CD4-positive, alpha-beta T cell (primary cell): ENCODE measurements at regions of chr12 and their contacts with region 1.

Region 1: DNA sequence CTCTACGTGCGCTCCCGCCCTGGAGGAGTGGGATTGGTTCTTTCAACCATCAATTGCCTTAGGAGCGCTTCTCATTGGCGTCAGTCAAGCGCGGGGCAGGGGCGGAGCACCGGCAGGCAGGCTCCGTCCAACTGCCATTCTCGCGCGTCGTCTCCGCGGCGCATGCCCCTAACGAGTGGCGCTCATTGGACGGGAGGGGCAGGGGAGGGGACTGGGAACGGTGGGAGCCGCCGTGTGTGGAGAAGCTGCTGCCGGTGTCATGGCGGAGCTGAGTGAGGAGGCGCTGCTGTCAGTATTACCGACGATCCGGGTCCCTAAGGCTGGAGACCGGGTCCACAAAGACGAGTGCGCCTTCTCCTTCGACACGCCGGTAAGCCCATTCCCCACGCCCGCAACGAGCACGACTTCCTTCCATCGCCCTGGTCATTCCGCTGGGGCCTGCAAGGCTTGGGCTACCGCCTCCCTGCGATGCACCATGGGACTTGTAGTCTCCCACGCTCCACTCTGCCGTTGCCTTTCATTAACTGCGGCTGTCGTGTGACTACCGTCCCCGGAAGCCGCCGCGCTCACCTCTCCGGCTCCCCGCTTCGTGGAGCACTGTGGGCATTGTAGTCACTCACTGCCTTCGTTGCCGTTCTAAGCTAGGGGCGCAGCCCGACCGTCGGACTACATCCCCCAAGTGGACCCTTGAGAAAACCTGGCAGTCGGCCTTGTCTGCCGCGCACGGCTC is at the start of gene USP5:
- DNase-seq: peak; percentile 94 to 100 (median 97)
- ATAC-seq: peak; percentile 77
- H3K4me3 ChIP-seq: peak within 1 kb of the TSS; percentile 73
- H3K4me3 Mint-ChIP-seq: peak within 1 kb of the TSS; percentile 91
- H3K27ac ChIP-seq: peak within 1 kb of the TSS; percentile 89 to 95
- H3K27ac Mint-ChIP-seq: peak within 1 kb of the TSS; percentile 87
- H3K4me1 ChIP-seq: peaks cover 42% of the 10 kb centered on the region
- H3K4me1 Mint-ChIP-seq: peaks cover 29% of the 10 kb centered on the region
- H3K27me3 ChIP-seq: no peaks in the 10 kb centered on the region
- H3K27me3 Mint-ChIP-seq: no peaks in the 10 kb centered on the region
- CTCF ChIP-seq: no peak
- total RNA-seq, gene USP5: 31.8 to 33.4 TPM

Region 2: DNA sequence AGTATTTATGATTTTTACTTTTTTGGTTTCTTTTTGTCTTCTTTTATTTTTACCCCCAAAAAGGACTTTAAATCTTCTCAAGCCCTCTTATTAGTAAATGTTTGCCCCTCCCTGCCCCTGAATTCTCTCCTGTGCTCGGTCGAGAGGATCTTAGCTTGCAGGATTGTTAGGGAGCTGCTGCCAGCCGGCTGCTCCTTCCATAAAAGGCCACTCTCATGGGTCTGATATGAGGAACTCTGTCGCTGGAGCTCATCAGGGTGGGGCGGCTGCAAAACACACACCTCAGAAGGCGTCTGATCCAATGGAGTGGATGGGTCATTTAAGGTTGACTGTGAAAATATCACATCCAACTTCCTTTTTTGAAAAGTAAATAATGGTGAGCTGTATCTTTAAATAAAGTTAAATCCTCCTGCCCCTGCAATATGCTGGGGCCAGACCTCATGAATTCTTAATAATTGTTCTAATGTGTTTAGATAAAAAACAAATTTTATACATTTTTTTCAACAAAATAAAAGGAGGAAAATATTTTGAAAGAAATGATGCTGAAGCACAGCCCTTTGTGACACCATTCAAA is 459.5 kb before region 1 on chr12:
- CTCF ChIA-PET with region 1: no interaction called
- POLR2A ChIA-PET with region 1: no interaction called
- intact Hi-C with region 1: no loop called
- DNase-seq: no peak
- ATAC-seq: no peak
- H3K4me3 ChIP-seq: no peak overlapping the region
- H3K4me3 Mint-ChIP-seq: no peak overlapping the region
- H3K27ac ChIP-seq: no peak overlapping the region
- H3K27ac Mint-ChIP-seq: no peak overlapping the region
- H3K4me1 ChIP-seq: no peaks in the 10 kb centered on the region
- H3K4me1 Mint-ChIP-seq: no peaks in the 10 kb centered on the region
- H3K27me3 ChIP-seq: no peaks in the 10 kb centered on the region
- H3K27me3 Mint-ChIP-seq: no peaks in the 10 kb centered on the region
- CTCF ChIP-seq: no peak

Region 3: GRCh38 chr12:6662906-6663742 is 189.0 kb before region 1 on chr12 and contains the start of gene ING4:
- CTCF ChIA-PET with region 1: no interaction called
- POLR2A ChIA-PET with region 1: interaction called, 4 read pairs
- intact Hi-C with region 1: loop called in 1 of 2 experiments (anchors 5 kb)
- DNase-seq: peak; percentile 88 to 99 (median 94)
- ATAC-seq: peak; percentile 97
- H3K4me3 ChIP-seq: peak within 1 kb of the TSS; percentile 82
- H3K4me3 Mint-ChIP-seq: peak within 1 kb of the TSS; percentile 95
- H3K27ac ChIP-seq: peak within 1 kb of the TSS; percentile 79 to 89
- H3K27ac Mint-ChIP-seq: peak within 1 kb of the TSS; percentile 91
- H3K4me1 ChIP-seq: peaks cover 29% of the 10 kb centered on the region
- H3K4me1 Mint-ChIP-seq: peaks cover 34% of the 10 kb centered on the region
- H3K27me3 ChIP-seq: no peaks in the 10 kb centered on the region
- H3K27me3 Mint-ChIP-seq: no peaks in the 10 kb centered on the region
- CTCF ChIP-seq: no peak
- total RNA-seq, gene ING4: 13.8 to 17.4 TPM

Region 4: GRCh38 chr12:6792522-6793201 is 59.4 kb before region 1 on chr12:
- CTCF ChIA-PET with region 1: no interaction called
- POLR2A ChIA-PET with region 1: interaction called, 16 read pairs
- intact Hi-C with region 1: loop called in 1 of 2 experiments (anchors 2 kb)
- DNase-seq: peak in 12 of 14 experiments; percentile 41 to 75 (median 58)
- ATAC-seq: peak; percentile 69
- H3K4me3 ChIP-seq: peak overlapping the region; percentile 66
- H3K4me3 Mint-ChIP-seq: peak overlapping the region; percentile 96
- H3K27ac ChIP-seq: peak overlapping the region; percentile 72 to 81
- H3K27ac Mint-ChIP-seq: peak overlapping the region; percentile 93
- H3K4me1 ChIP-seq: peaks cover 79% of the 10 kb centered on the region
- H3K4me1 Mint-ChIP-seq: peaks cover 80% of the 10 kb centered on the region
- H3K27me3 ChIP-seq: no peaks in the 10 kb centered on the region
- H3K27me3 Mint-ChIP-seq: no peaks in the 10 kb centered on the region
- CTCF ChIP-seq: no peak

Region 5: GRCh38 chr12:6867413-6868210 is 15.5 kb after region 1 on chr12 and contains the start of gene TPI1:
- CTCF ChIA-PET with region 1: interaction called, 46 read pairs
- POLR2A ChIA-PET with region 1: interaction called, 106 read pairs
- intact Hi-C with region 1: loop called (anchors 1 kb)
- DNase-seq: peak; percentile 55 to 88 (median 72)
- ATAC-seq: peak; percentile 64
- H3K4me3 ChIP-seq: peak within 1 kb of the TSS; percentile 68
- H3K4me3 Mint-ChIP-seq: peak within 1 kb of the TSS; percentile 94
- H3K27ac ChIP-seq: peak within 1 kb of the TSS; percentile 73 to 78
- H3K27ac Mint-ChIP-seq: peak within 1 kb of the TSS; percentile 80
- H3K4me1 ChIP-seq: peaks cover 53% of the 10 kb centered on the region
- H3K4me1 Mint-ChIP-seq: peaks cover 56% of the 10 kb centered on the region
- H3K27me3 ChIP-seq: no peaks in the 10 kb centered on the region
- H3K27me3 Mint-ChIP-seq: no peaks in the 10 kb centered on the region
- CTCF ChIP-seq: no peak
- total RNA-seq, gene TPI1: 46.8 to 48.7 TPM

Region 6: DNA sequence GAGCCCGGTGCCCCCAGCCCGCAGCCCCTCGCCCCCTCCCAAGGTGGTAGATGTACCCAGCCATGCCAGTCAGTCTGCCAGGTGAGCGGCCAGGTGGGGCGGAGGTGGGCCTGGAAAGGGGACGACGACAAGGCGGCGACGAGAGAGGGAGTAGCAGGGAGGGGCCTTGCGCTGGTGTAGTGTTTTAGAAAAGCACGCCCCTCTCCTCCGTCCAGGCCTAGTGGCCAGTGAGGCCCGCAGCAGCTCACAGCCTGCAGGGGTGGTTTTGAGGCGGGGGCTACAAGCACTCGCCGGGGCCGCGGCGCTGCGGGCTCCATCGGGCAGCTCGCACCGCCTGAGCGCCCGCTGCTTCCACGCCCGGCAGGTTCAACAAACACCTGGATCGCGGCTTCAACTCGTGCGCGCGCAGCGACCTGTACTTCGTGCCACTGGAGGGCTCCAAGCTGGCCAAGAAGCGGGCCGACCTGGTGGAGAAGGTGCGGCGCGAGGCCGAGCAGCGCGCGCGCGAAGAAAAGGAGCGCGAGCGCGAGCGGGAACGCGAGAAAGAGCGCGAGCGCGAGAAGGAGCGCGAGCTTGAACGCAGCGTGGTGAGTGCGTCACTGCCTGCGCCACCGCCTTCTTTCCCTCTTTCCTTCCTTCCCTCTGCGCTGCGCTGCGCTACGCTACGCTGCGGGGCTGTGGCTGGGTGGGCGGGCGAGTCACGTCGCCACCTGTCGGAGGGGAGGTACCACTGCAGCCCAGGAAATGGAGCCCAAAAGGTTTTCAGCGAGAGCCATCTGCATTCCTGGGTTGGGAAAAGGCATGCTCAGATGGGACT is 85.6 kb after region 1 on chr12:
- CTCF ChIA-PET with region 1: interaction called, 10 read pairs
- POLR2A ChIA-PET with region 1: interaction called, 54 read pairs
- intact Hi-C with region 1: no loop called
- DNase-seq: peak; percentile 86 to 99 (median 92)
- ATAC-seq: peak; percentile 91
- H3K4me3 ChIP-seq: peak overlapping the region; percentile 72
- H3K4me3 Mint-ChIP-seq: peak overlapping the region; percentile 90
- H3K27ac ChIP-seq: peak overlapping the region; percentile 89 to 92
- H3K27ac Mint-ChIP-seq: peak overlapping the region; percentile 95
- H3K4me1 ChIP-seq: peaks cover 47% of the 10 kb centered on the region
- H3K4me1 Mint-ChIP-seq: peaks cover 61% of the 10 kb centered on the region
- H3K27me3 ChIP-seq: no peaks in the 10 kb centered on the region
- H3K27me3 Mint-ChIP-seq: no peaks in the 10 kb centered on the region
- CTCF ChIP-seq: peak; percentile 89

Region 7: DNA sequence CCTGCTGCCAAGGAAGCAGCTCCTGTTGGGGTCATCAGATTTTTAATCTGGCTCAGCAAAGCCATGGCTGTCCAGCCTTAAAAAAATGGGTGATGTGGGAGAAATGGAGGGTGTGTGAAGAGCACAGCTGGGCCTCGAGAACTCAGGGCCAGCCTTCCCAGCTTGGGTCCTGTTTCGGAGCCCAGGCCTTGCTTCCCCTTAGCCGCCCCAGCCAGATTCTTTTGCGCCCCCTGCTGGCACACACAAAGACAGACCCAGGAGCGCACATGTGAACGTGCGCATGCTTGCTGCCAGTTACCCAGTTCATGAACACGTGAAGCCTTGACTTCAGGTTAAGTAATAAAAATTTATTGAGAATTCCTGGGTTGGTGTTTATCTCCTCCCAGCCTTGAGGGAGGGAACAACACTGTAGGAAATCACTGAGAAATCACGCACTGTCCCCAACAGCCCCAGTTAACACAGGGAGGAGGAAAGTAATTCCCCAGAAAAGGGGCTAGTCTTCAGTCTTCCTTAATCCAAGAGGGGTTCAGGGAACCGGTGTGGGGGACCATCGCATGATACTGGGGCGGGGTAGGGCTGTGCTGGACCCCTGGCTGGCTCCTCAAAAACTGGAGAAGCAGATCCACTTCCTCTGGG is 113.1 kb after region 1 on chr12:
- CTCF ChIA-PET with region 1: no interaction called
- POLR2A ChIA-PET with region 1: no interaction called
- intact Hi-C with region 1: loop called (anchors 5 kb)
- DNase-seq: peak; percentile 83 to 96 (median 86)
- ATAC-seq: peak; percentile 50
- H3K4me3 ChIP-seq: no peak overlapping the region
- H3K4me3 Mint-ChIP-seq: peak overlapping the region; percentile 79
- H3K27ac ChIP-seq: peak overlapping the region; percentile 38 to 39
- H3K27ac Mint-ChIP-seq: peak overlapping the region; percentile 90
- H3K4me1 ChIP-seq: peaks cover 70% of the 10 kb centered on the region
- H3K4me1 Mint-ChIP-seq: peaks cover 58% of the 10 kb centered on the region
- H3K27me3 ChIP-seq: no peaks in the 10 kb centered on the region
- H3K27me3 Mint-ChIP-seq: no peaks in the 10 kb centered on the region
- CTCF ChIP-seq: peak; percentile 94